ENCODE measurements at regions of chr15 and their contacts with region 1.

Region 1: DNA sequence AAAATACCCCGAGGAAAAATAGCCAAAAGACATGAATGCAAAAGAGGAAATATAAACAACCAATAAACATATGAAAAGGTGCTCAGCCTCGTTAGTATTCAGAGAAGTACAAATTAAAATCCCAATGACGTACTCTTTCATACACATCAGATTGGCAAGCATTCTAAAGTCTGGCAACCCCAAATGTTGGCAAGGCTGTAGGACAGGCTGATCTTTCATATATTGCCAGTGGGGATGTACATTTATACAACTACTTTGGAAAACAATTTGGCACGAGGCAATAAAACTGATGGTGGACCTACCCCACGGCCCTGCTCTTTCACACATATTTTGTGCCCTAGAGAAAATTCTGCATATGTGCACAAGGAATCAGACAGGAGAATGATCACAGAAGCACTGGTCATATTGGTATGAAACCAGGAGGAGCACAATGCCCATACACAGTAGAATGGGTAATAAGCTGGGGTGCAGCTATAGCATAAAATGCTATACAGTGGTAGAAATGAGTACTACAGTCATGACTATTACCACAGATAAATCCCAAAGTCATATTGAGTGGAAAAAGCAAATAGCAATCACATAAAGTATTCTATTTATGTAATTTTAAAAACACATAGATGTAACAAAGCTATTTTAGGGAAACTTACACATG is 176.0 kb upstream of the SLC24A5 start:
- DNase-seq: no peak
- H3K4me3 ChIP-seq: no peak overlapping the region
- CTCF ChIP-seq: no peak

Region 2: DNA sequence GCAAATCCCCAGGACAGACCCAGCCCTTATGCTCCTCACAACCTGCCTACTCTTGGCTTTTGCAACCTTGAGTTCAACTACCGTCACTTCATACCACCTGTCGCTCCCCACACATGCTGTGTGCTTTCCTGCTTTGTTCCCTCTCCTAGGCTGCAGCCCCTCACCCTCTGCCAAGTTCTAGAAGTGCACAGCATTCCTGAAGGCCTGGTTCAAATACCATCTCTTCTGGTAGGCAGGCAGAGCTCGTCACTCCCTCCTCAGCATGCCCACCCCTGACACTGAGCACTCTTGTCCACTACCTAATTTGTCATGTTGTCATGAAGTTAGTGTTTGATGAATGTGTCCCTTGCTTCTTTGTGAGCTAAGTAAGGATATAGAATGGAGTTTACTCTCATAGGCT is 97.9 kb before region 1 on chr15:
- in situ Hi-C with region 1: loop called (anchors 5 kb)
- DNase-seq: no peak
- H3K4me3 ChIP-seq: no peak overlapping the region
- CTCF ChIP-seq: no peak

Measured in astrocyte of the cerebellum (primary cell).